Heart left ventricle (tissue), 16 donors: ENCODE measurements at regions of chr2 and their contacts with region 1.

Region 1: DNA sequence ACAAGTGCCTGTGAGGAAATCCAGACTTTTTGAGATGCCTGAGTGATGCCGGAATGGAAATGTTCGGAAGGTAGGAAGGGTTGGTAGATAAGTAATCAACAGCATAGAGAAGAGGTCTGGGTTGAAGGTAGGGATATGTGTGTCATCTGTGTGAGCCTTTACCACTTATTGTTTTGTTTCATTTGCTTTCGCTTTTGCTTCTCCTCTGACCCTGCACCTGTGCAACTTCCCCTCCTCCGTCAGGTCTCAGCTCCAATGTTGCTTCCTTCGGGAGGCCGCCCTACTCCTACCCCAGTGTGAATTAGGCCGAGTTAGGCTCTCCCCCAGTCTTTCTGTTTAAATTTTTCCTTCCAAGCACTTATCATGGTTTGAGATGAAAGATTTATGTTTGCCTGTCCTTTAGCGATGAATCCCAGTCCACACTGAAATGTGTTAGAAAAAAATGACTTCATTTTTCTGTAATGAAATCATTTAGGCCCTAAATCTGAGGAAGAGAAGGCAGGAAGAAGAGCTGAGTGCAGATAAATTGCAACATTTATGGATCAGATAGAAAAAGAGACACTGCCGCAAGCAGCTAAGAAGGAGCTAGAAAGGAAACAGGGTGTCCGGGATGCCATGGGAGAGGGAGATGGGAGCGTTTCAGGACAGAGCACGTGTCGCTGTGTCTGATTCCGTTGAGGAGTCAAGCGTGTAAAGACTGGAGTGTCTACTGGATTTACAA is 139.6 kb upstream of the PELI1 start:
- DNase-seq: peak in 1 of 5 donors; percentile 30
- ATAC-seq: peak; percentile 25 to 84 (median 34)
- H3K4me3 ChIP-seq: peak overlapping the region in 6 of 12 donors; percentile 3 to 18 (median 10)
- H3K27ac ChIP-seq: peak overlapping the region in 9 of 12 donors; percentile 14 to 63 (median 40)
- H3K4me1 ChIP-seq: peaks cover 0 to 34% (median 13%) of the 10 kb centered on the region in 12 donors
- H3K27me3 ChIP-seq: no peaks in the 10 kb centered on the region
- CTCF ChIP-seq: no peak
- POLR2A ChIP-seq: no peak

Region 2: GRCh38 chr2:63073994-63074393 is 1209.8 kb before region 1 on chr2:
- intact Hi-C with region 1: loop called in 1 of 10 experiments (anchors 5 kb)
- DNase-seq: no peak
- ATAC-seq: no peak
- H3K4me3 ChIP-seq: no peak overlapping the region
- H3K27ac ChIP-seq: no peak overlapping the region
- H3K4me1 ChIP-seq: no peaks in the 10 kb centered on the region
- H3K27me3 ChIP-seq: peaks cover 0 to 58% (median 8%) of the 10 kb centered on the region in 9 donors
- CTCF ChIP-seq: no peak
- POLR2A ChIP-seq: no peak

Region 3: DNA sequence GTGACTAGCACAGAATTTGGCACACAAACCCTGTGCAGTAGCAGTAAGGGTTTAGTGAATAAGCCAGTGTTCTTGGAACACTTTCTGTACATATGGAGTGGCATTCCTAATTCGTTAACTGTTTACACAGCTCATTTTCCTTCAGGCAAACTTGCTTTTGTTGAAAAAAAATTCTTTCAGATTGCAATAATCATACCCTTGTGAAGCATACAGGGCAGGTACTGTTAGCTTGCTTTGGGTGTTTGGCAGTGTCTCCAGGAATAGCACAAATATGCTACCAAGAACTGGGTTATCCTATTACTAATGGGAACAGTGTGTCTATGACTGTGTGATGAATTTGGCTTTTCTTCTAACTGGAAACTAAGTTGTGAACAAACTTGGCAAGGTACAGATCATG is 408.7 kb before region 1 on chr2:
- intact Hi-C with region 1: no loop called
- DNase-seq: no peak
- ATAC-seq: peak; percentile 54 to 67 (median 60)
- H3K4me3 ChIP-seq: no peak overlapping the region
- H3K27ac ChIP-seq: peak overlapping the region in 8 of 12 donors; percentile 13 to 71 (median 41)
- H3K4me1 ChIP-seq: peaks cover 0 to 61% (median 33%) of the 10 kb centered on the region in 12 donors
- H3K27me3 ChIP-seq: no peaks in the 10 kb centered on the region
- CTCF ChIP-seq: no peak
- POLR2A ChIP-seq: no peak

Region 4: GRCh38 chr2:64192125-64192479 is 91.7 kb before region 1 on chr2:
- intact Hi-C with region 1: no loop called
- DNase-seq: no peak
- ATAC-seq: peak; percentile 47 to 80 (median 68)
- H3K4me3 ChIP-seq: no peak overlapping the region
- H3K27ac ChIP-seq: peak overlapping the region in 4 of 12 donors; percentile 13 to 89 (median 34)
- H3K4me1 ChIP-seq: peaks cover 0 to 53% (median 0%) of the 10 kb centered on the region in 12 donors
- H3K27me3 ChIP-seq: no peaks in the 10 kb centered on the region
- CTCF ChIP-seq: no peak
- POLR2A ChIP-seq: no peak

Region 5: DNA sequence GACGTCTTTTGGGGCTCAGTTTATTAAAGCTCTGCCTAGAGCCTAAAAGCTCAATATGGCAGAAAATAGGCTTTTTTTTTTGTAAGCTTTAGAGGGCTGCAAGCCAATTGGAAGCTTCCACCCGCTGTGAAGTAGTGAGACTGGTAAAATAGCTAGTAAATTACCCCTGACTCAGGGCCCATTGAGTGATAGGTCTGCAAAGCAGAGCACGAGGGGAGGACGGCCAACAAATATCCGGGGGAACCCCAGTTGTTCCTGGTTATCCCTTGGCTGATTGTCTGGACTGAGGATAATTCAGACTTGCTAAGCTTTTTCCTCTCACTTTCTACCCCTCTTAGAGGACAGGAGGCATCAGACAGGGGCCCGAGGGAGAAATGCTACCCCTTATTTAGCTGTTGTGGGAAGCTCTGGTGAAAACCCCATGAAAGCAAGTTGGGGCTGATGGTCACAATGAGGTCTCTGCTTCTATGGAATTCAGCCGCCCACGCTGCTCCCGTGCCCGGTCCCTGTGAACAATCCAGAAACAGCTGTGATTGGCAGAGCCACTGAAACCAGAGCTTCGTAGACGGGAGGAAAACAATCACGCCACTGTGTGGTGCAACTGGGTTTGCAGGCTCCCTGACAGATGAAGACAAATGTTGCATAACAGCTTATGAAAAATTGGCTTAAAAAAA is 28.3 kb after region 1 on chr2:
- intact Hi-C with region 1: no loop called
- DNase-seq: peak; percentile 75 to 83 (median 79)
- ATAC-seq: peak; percentile 73 to 97 (median 94)
- H3K4me3 ChIP-seq: peak overlapping the region in 6 of 12 donors; percentile 2 to 40 (median 24)
- H3K27ac ChIP-seq: peak overlapping the region in 10 of 12 donors; percentile 12 to 69 (median 43)
- H3K4me1 ChIP-seq: peaks cover 0 to 26% (median 15%) of the 10 kb centered on the region in 12 donors
- H3K27me3 ChIP-seq: no peaks in the 10 kb centered on the region
- CTCF ChIP-seq: peak; percentile 35 to 71 (median 52)
- POLR2A ChIP-seq: no peak